ENCODE measurements at regions of chr11 and their contacts with region 1.

Region 1: DNA sequence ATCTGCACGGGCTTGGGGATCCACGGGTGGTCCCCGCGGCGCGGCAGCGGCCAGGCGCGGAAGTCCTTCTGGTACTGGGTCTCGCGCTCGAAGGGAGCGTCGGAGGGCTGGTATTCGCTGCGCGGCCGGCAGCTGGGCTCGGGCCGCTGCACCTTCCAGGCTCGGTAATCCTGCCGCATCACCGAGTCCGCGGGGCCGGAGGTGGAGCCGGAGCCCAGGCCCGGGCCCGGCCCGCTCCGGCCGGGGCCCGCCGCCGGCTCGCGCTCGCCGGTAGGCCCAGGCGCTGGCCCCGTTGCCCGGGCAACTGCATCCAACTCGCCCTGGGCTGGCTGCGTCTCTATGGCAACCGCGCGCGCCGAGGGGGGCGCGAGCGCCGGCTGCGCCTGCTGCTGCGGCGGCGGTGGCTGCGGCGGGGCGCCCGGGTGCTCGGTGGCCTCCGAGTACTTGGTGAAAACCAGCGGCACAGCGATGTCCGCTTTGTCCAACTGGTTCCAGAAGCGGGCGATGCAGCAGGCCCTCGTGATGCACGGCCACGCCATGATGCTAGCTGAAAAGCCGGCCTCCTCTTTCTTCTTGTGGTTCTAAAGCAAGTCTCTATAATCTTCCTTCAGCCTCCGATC is 897 bp downstream of the MAP6 start:
- DNase-seq: peak; percentile 73 to 84
- ATAC-seq: peak; percentile 68
- H3K4me3 ChIP-seq: peak overlapping the region; percentile 73 to 84
- H3K27ac ChIP-seq: peak overlapping the region; percentile 2 to 12
- H3K4me1 ChIP-seq: no peaks in the 10 kb centered on the region
- H3K27me3 ChIP-seq: no peaks in the 10 kb centered on the region

Region 2: GRCh38 chr11:75582895-75583717 is 84.8 kb before region 1 on chr11:
- intact Hi-C with region 1: loop called (anchors 5 kb)
- DNase-seq: peak; percentile 81 to 90
- ATAC-seq: peak; percentile 91
- H3K4me3 ChIP-seq: peak overlapping the region; percentile 68 to 81
- H3K27ac ChIP-seq: peak overlapping the region; percentile 81 to 98
- H3K4me1 ChIP-seq: no peaks in the 10 kb centered on the region
- H3K27me3 ChIP-seq: no peaks in the 10 kb centered on the region

Region 3: DNA sequence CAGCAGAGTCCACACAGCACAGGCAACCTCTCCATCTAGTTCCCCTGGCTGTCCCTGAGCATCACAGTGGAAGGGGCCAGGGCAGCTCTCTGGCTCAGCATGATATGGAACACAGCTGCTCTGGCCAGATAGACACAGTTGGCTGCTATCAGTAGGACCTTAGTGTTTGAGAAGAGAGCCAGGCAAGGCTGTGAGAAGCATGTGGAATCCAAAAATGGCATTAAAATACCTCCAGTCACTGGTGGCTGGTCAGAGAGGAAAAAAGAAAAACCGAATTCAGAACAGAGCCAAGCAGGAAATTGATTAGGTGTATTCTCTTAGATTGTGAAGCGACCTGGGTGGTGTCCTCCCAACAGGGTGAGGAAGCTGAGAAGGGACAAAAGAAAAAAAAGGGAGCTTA is 78.0 kb before region 1 on chr11:
- intact Hi-C with region 1: loop called in 1 of 2 experiments (anchors 5 kb)
- DNase-seq: no peak
- ATAC-seq: no peak
- H3K4me3 ChIP-seq: no peak overlapping the region
- H3K27ac ChIP-seq: no peak overlapping the region
- H3K4me1 ChIP-seq: no peaks in the 10 kb centered on the region
- H3K27me3 ChIP-seq: no peaks in the 10 kb centered on the region

Region 4: GRCh38 chr11:75603791-75604736 is 63.9 kb before region 1 on chr11:
- intact Hi-C with region 1: loop called in 1 of 2 experiments (anchors 5 kb)
- DNase-seq: no peak
- ATAC-seq: no peak
- H3K4me3 ChIP-seq: peak overlapping the region in 1 of 2 donors; percentile 12
- H3K27ac ChIP-seq: peak overlapping the region; percentile 71 to 81
- H3K4me1 ChIP-seq: no peaks in the 10 kb centered on the region
- H3K27me3 ChIP-seq: no peaks in the 10 kb centered on the region

Region 5: DNA sequence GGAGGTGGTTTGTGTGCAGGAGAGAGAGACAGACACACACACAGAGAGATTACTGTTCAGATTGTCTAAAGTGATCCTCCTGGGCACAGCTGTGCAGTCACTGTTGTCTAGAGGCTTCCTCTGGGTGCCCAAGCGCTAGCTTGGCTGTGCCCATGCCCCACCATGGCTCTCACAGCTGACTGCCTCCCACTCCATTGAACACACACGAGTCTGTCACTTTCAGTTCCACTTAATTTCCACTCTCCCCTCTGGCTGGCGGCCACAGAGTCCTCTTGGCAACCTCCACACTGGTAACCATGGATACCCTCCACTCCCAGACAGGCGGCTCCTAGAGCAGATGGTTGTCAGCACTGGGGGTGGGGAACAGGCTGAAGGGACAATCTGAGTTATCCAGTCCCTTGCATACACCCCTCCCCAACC is 28.2 kb before region 1 on chr11:
- intact Hi-C with region 1: no loop called
- DNase-seq: peak; percentile 86 to 92
- ATAC-seq: peak; percentile 84
- H3K4me3 ChIP-seq: no peak overlapping the region
- H3K27ac ChIP-seq: no peak overlapping the region
- H3K4me1 ChIP-seq: peaks cover 3 to 5% of the 10 kb centered on the region in 2 donors
- H3K27me3 ChIP-seq: no peaks in the 10 kb centered on the region

Region 6: DNA sequence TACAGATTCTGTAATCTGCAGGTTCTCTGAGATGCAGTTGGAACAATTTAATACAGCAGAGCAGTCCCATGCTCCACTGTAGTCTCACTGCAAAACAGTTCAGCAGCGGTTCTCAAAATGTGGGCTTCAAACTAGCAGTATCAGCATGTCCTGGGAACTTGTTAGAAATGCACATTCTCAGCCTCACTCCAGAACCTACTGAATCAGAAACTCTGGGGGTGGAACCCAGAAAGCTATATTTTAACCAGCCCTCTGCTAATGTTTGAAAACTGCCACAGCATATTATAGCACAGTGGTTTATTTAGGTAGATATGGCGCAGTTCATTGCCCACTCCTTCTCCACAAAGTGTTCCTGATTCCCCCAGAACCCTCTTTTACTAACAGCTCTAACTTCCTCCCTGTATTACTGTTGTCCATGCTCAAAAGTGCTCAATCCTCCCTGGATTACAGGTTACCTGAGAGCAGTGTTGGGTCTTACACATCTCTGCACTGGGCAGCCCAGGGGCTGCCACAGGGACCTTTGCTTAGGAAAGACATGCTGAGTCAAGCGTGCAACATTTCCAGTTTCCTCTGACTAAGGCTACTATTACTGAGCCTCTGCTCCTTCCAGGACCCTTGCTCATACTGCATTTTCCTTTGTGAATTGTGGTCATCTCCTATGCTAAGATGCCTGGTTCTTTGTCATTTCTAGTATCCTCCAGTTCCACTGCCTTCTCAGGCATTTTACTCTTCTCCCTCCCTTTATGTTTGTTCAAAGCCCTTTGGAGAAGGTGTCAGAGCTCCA is 93.0 kb after region 1 on chr11:
- intact Hi-C with region 1: no loop called
- DNase-seq: no peak
- ATAC-seq: no peak
- H3K4me3 ChIP-seq: no peak overlapping the region
- H3K27ac ChIP-seq: no peak overlapping the region
- H3K4me1 ChIP-seq: no peaks in the 10 kb centered on the region
- H3K27me3 ChIP-seq: no peaks in the 10 kb centered on the region

Region 7: GRCh38 chr11:76013526-76013925 is 345.6 kb after region 1 on chr11:
- intact Hi-C with region 1: no loop called
- DNase-seq: no peak
- ATAC-seq: no peak
- H3K4me3 ChIP-seq: no peak overlapping the region
- H3K27ac ChIP-seq: no peak overlapping the region
- H3K4me1 ChIP-seq: no peaks in the 10 kb centered on the region
- H3K27me3 ChIP-seq: no peaks in the 10 kb centered on the region

Measured in aorta (tissue), 5 donors.